ENCODE measurements at regions of chr9 and their contacts with region 1.

Region 1: GRCh38 chr9:120438836-120439546 is 141.0 kb downstream of the CDK5RAP2 start:
- DNase-seq: no peak
- CTCF ChIP-seq: peak; percentile 19

Region 2: GRCh38 chr9:120424248-120424647 is 14.7 kb before region 1 on chr9:
- CTCF ChIA-PET with region 1: interaction called, 16 read pairs
- POLR2A ChIA-PET with region 1: no interaction called
- DNase-seq: no peak
- CTCF ChIP-seq: no peak